ENCODE measurements at regions of chr17 and their contacts with region 1.

Region 1: DNA sequence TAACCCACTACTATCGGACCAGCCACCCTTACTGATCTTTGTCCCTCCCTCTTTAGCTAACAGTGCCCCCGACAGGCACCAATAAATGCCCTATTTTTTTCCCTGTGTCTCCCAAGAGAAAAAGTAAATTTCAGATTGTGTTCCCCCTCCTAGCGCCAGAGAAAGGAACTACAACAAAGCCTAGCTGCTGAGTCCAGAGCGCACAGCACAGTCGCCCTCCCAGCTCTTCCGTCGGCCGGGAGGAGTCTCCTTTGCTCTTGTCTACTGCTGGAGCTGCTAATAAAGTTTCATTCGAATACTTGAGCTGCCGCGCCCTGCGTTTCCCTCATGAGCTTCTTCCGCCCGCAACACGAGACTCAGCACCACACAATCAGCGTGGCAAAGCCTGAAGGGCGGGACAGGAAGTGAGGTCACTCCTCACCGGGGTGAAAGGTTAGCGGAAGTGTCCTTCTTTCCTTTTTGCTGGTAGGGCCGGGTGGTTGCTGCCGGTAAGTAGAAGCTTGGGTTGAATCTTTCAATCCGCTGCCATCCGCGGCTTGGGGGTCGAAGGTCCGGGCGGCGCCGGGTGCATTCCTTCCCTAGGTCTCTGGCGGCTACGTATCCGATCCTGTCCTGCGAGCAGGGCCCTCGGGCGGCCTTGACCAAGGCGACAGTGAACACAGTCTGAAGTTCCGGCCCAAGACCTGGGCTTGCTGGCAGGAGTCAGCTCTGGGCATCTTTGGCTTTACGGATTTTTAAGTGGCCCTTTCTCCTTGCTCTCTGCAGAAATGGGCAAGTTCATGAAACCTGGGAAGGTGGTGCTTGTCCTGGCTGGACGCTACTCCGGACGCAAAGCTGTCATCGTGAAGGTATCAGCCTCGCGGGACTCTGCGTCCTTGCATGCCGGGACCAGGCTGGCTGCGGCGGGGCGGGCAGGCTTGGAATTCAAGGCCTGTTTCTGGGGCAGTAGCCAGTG is at the start of gene RPL27:
- DNase-seq: peak; percentile 98
- ATAC-seq: peak; percentile 85
- H3K4me3 ChIP-seq: peak within 1 kb of the TSS; percentile 95
- H3K27ac ChIP-seq: peak within 1 kb of the TSS; percentile 79
- H3K4me1 ChIP-seq: peaks cover 36% of the 10 kb centered on the region
- H3K27me3 ChIP-seq: no peaks in the 10 kb centered on the region
- CTCF ChIP-seq: peak; percentile 73
- total RNA-seq, gene RPL27: 667 and 784 TPM in 2 replicates

Region 2: GRCh38 chr17:42843358-42843934 is 154.8 kb before region 1 on chr17:
- CTCF ChIA-PET with region 1: interaction called, 4 read pairs
- POLR2A ChIA-PET with region 1: no interaction called
- intact Hi-C with region 1: loop called (anchors 5 kb)
- DNase-seq: peak; percentile 63
- ATAC-seq: peak; percentile 72
- H3K4me3 ChIP-seq: no peak overlapping the region
- H3K27ac ChIP-seq: no peak overlapping the region
- H3K4me1 ChIP-seq: peaks cover 8% of the 10 kb centered on the region
- H3K27me3 ChIP-seq: no peaks in the 10 kb centered on the region
- CTCF ChIP-seq: peak; percentile 81

Region 3: GRCh38 chr17:42964161-42964932 is 33.9 kb before region 1 on chr17 and contains the start of gene AARSD1:
- CTCF ChIA-PET with region 1: interaction called, 5 read pairs
- POLR2A ChIA-PET with region 1: no interaction called
- intact Hi-C with region 1: loop called (anchors 2 kb)
- DNase-seq: peak; percentile 90
- ATAC-seq: peak; percentile 97
- H3K4me3 ChIP-seq: peak within 1 kb of the TSS; percentile 87
- H3K27ac ChIP-seq: peak within 1 kb of the TSS; percentile 55
- H3K4me1 ChIP-seq: peaks cover 12% of the 10 kb centered on the region
- H3K27me3 ChIP-seq: no peaks in the 10 kb centered on the region
- CTCF ChIP-seq: no peak
- total RNA-seq, gene AARSD1: 32.5 and 34.7 TPM in 2 replicates

Region 4: DNA sequence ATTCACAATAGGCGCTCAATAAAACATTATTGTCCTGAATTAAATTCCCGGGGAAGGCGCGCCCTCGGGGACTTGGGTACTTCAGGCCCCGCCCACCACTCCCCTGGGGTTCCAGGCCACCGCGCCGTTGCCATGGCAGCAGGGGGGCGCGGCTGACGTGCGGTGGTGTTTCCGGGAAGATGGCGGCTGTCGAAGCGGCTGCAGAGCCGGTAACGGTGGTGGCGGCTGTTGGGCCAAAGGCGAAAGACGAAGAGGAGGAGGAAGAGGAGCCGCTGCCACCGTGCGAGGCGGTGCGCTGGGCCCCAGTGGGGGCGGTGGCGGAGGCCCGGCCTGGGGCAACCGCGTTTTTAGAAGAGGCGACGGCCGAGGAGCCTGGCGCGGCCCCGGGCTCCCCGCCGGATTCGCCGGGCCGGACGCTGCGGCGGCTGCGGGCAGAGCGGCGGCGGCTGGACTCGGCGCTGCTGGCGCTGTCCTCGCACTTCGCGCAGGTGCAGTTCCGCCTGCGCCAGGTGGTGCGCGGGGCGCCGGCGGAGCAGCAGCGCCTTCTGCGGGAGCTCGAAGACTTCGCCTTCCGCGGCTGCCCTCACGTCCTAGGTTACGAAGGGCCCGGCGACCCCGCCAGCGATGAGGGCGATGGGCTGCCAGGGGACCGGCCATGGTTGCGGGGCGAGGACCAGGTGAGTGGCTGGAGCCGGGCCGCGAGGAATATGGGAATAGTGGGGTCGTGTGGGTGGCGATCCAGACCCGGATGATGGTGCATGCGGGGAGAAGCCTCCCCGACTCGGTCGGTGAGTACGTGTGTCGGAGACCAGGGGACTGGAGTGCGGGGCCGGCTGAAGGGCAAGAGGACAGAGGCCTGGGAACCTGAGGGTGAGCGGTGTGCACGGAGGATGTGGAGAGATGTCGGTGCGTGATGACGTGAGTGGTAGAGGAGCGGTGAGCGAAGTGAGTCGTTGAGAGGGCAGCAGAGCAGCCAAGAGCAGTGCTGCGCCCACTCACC is 17.6 kb before region 1 on chr17 and contains the start of gene RUNDC1:
- CTCF ChIA-PET with region 1: interaction called, 22 read pairs
- POLR2A ChIA-PET with region 1: no interaction called
- intact Hi-C with region 1: no loop called
- DNase-seq: peak; percentile 83
- ATAC-seq: peak; percentile 80
- H3K4me3 ChIP-seq: peak within 1 kb of the TSS; percentile 99
- H3K27ac ChIP-seq: peak within 1 kb of the TSS; percentile 82
- H3K4me1 ChIP-seq: peaks cover 18% of the 10 kb centered on the region
- H3K27me3 ChIP-seq: no peaks in the 10 kb centered on the region
- CTCF ChIP-seq: no peak
- total RNA-seq, gene RUNDC1: 9.5 and 15.6 TPM in 2 replicates

Region 5: DNA sequence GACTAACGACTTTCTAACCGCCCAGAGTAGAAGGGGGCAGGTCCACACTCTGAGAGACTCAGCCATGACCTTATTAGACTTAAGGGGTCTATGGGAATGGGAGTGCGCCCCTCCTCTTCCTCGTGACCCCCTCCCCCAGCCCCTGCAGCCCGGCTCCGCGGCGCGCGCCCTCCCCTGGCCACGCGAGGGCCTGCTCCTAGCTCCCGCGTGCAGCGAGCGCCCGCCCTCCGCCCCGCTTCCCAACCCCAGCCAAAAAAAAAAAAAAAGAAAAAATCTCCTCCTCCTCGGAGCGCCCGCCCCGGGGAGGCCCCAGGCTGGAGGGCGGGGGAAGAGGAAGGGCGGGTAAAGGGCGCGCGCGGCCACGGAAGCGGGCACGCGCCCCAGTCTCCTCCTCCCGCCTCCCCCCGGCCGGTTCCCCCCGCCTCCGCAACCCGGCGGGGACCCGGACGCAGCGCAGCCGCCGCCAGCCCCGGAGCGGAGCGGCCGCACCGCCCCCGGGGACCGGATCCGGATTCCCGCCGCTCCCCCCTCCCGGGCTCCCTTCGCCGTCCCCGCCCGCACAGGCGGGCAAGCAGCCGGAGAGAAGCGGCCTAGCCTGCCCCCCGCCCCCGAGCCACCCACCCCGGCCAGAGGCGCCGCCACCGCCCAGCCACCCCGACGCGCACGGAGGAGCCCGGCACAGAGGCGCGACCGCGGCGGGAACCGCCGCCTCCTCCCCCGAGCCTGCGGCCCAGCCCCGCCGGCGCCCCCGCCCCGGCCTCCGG is 1220.3 kb after region 1 on chr17:
- CTCF ChIA-PET with region 1: no interaction called
- POLR2A ChIA-PET with region 1: interaction called, 16 read pairs
- intact Hi-C with region 1: no loop called
- DNase-seq: peak; percentile 97
- ATAC-seq: peak; percentile 10
- H3K4me3 ChIP-seq: peak overlapping the region; percentile 73
- H3K27ac ChIP-seq: peak overlapping the region; percentile 71
- H3K4me1 ChIP-seq: peaks cover 32% of the 10 kb centered on the region
- H3K27me3 ChIP-seq: no peaks in the 10 kb centered on the region
- CTCF ChIP-seq: peak; percentile 76